ENCODE measurements at regions of chr20 and their contacts with region 1.

Region 1: GRCh38 chr20:57680131-57680716 is 29.6 kb downstream of the PMEPA1 start:
- DNase-seq: peak; percentile 95
- ATAC-seq: peak; percentile 71
- H3K4me3 ChIP-seq: peak overlapping the region; percentile 3 to 55 (median 25)
- H3K4me3 Mint-ChIP-seq: peak overlapping the region; percentile 86
- H3K27ac ChIP-seq: peak overlapping the region; percentile 88 to 96
- H3K27ac Mint-ChIP-seq: peak overlapping the region; percentile 96
- H3K4me1 ChIP-seq: peaks cover 94 to 100% of the 10 kb centered on the region in 2 donors
- H3K4me1 Mint-ChIP-seq: peaks cover 99% of the 10 kb centered on the region
- H3K27me3 ChIP-seq: no peaks in the 10 kb centered on the region
- H3K27me3 Mint-ChIP-seq: no peaks in the 10 kb centered on the region
- CTCF ChIP-seq: no peak

Region 2: GRCh38 chr20:57190363-57191264 is 489.6 kb before region 1 on chr20:
- CTCF ChIA-PET with region 1: no interaction called
- POLR2A ChIA-PET with region 1: no interaction called
- intact Hi-C with region 1: no loop called
- DNase-seq: no peak
- ATAC-seq: no peak
- H3K4me3 ChIP-seq: no peak overlapping the region
- H3K4me3 Mint-ChIP-seq: no peak overlapping the region
- H3K27ac ChIP-seq: no peak overlapping the region
- H3K27ac Mint-ChIP-seq: no peak overlapping the region
- H3K4me1 ChIP-seq: no peaks in the 10 kb centered on the region
- H3K4me1 Mint-ChIP-seq: no peaks in the 10 kb centered on the region
- H3K27me3 ChIP-seq: no peaks in the 10 kb centered on the region
- H3K27me3 Mint-ChIP-seq: peaks cover 3% of the 10 kb centered on the region
- CTCF ChIP-seq: no peak

Region 3: DNA sequence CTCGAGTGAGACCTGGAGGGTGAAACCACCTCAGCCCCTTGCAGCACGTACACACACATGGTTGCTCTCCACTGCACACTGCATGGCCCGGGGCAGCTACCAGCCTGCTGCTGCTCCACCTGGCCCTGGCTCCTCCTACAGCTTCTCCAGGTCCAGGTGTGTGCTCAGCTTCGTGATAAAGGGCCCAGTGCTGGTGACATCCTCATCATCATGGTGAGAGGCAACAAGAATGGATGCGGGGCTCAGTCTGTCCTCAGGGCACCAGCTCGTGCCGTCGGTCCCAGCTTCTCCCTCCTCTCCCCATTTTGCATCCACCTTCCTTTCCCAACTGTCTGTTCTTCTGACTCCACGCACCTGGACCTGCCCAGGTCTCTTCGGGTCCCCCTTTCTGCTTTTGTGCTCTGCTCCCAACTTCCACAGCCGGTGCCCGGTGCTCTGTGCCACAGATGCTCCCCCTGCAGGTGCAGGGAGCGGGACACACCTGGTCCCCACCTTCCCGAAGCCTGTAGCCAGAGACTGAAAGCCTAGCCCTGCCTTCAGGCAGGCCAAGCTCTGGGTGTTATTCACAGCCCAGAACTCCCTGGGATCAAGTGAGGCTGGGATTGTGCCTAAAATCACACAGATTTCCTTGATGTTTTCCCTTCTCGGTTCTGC is 389.3 kb before region 1 on chr20:
- CTCF ChIA-PET with region 1: no interaction called
- POLR2A ChIA-PET with region 1: no interaction called
- intact Hi-C with region 1: no loop called
- DNase-seq: no peak
- ATAC-seq: no peak
- H3K4me3 ChIP-seq: no peak overlapping the region
- H3K4me3 Mint-ChIP-seq: no peak overlapping the region
- H3K27ac ChIP-seq: no peak overlapping the region
- H3K27ac Mint-ChIP-seq: no peak overlapping the region
- H3K4me1 ChIP-seq: no peaks in the 10 kb centered on the region
- H3K4me1 Mint-ChIP-seq: no peaks in the 10 kb centered on the region
- H3K27me3 ChIP-seq: peaks cover 0 to 20% (median 2%) of the 10 kb centered on the region in 4 experiments
- H3K27me3 Mint-ChIP-seq: peaks cover 57% of the 10 kb centered on the region
- CTCF ChIP-seq: no peak

Region 4: GRCh38 chr20:57622579-57623377 is 57.4 kb before region 1 on chr20:
- CTCF ChIA-PET with region 1: interaction called, 70 read pairs
- POLR2A ChIA-PET with region 1: interaction called, 19 read pairs
- intact Hi-C with region 1: loop called (anchors 1 kb)
- DNase-seq: peak; percentile 69
- ATAC-seq: no peak
- H3K4me3 ChIP-seq: no peak overlapping the region
- H3K4me3 Mint-ChIP-seq: peak overlapping the region; percentile 13
- H3K27ac ChIP-seq: no peak overlapping the region
- H3K27ac Mint-ChIP-seq: peak overlapping the region; percentile 80
- H3K4me1 ChIP-seq: peaks cover 54 to 59% of the 10 kb centered on the region in 2 donors
- H3K4me1 Mint-ChIP-seq: peaks cover 65% of the 10 kb centered on the region
- H3K27me3 ChIP-seq: no peaks in the 10 kb centered on the region
- H3K27me3 Mint-ChIP-seq: no peaks in the 10 kb centered on the region
- CTCF ChIP-seq: peak; percentile 82

Region 5: DNA sequence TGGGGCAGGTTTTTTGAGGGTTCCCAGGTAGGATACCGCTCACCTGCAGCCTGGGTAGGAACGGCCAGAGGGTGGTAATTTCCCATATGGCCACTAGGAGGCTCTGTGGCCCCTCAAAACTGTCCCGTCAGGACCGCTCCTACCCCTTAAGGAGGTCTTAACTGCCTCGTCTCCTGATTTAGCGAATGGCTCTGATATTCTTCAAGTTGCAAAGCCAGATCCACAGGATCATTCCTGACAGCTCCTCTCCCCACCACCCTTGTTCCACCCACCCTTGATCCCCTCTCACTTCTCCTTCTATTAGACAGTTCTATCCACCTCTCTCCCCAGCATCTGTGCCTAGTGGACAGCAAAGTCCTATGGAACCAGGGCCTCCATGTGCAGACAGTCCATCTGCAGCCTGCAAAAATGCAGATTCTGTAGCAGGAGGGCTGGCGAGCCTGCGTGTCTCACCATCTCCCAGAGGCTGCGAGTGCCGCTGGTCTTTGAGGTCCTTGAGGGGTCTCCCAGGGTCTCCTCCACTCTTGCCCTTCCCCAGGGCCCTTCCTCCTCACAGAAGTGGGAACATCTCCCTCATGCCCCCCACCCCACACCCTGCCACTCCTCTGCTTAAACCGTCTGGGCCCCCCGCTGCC is 25.7 kb before region 1 on chr20:
- CTCF ChIA-PET with region 1: interaction called, 62 read pairs
- POLR2A ChIA-PET with region 1: interaction called, 4 read pairs
- intact Hi-C with region 1: loop called (anchors 1 kb)
- DNase-seq: peak; percentile 85
- ATAC-seq: peak; percentile 94
- H3K4me3 ChIP-seq: no peak overlapping the region
- H3K4me3 Mint-ChIP-seq: no peak overlapping the region
- H3K27ac ChIP-seq: no peak overlapping the region
- H3K27ac Mint-ChIP-seq: no peak overlapping the region
- H3K4me1 ChIP-seq: peaks cover 4 to 18% of the 10 kb centered on the region in 2 donors
- H3K4me1 Mint-ChIP-seq: peaks cover 34% of the 10 kb centered on the region
- H3K27me3 ChIP-seq: no peaks in the 10 kb centered on the region
- H3K27me3 Mint-ChIP-seq: no peaks in the 10 kb centered on the region
- CTCF ChIP-seq: peak; percentile 95

Region 6: DNA sequence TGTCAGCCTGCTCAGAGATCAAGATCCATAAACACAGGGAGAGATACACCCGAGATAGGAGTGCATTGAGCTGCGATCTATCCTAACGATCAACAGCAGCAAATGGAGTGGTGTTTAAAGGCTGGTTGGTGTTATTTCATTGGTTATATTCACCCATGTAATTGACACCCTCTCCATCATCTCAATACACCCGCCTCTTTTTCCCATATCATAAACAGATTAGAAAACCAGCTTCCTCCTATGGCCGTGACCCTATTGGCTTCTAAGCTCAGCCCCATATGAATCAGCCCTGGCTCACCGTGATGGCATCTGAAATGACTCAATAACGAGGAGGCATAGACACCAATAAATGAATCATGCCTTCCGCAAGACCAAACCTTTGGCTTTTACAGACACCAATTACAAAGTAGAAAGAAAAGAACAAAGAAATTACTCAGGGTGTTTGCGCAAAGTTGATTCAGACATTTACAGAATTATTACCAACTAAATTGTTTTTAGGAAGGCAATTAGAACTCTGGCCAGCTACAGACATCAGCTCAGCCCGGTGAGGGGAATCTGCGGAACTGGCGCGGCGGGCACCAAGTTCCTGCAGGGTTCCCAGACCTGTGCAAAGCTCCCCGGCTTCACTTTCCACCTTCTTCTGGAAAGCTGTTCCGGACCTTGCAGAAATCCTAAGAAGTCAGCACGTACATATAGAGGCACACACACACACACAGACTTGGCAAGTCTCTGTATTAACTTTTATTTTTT is 18.1 kb after region 1 on chr20:
- CTCF ChIA-PET with region 1: interaction called, 43 read pairs
- POLR2A ChIA-PET with region 1: interaction called, 14 read pairs
- intact Hi-C with region 1: loop called (anchors 1 kb)
- DNase-seq: no peak
- ATAC-seq: no peak
- H3K4me3 ChIP-seq: peak overlapping the region in 1 of 5 experiments; percentile 44
- H3K4me3 Mint-ChIP-seq: peak overlapping the region; percentile 79
- H3K27ac ChIP-seq: no peak overlapping the region
- H3K27ac Mint-ChIP-seq: peak overlapping the region; percentile 13
- H3K4me1 ChIP-seq: peaks cover 97 to 99% of the 10 kb centered on the region in 2 donors
- H3K4me1 Mint-ChIP-seq: peaks cover 95% of the 10 kb centered on the region
- H3K27me3 ChIP-seq: no peaks in the 10 kb centered on the region
- H3K27me3 Mint-ChIP-seq: no peaks in the 10 kb centered on the region
- CTCF ChIP-seq: no peak

Region 7: DNA sequence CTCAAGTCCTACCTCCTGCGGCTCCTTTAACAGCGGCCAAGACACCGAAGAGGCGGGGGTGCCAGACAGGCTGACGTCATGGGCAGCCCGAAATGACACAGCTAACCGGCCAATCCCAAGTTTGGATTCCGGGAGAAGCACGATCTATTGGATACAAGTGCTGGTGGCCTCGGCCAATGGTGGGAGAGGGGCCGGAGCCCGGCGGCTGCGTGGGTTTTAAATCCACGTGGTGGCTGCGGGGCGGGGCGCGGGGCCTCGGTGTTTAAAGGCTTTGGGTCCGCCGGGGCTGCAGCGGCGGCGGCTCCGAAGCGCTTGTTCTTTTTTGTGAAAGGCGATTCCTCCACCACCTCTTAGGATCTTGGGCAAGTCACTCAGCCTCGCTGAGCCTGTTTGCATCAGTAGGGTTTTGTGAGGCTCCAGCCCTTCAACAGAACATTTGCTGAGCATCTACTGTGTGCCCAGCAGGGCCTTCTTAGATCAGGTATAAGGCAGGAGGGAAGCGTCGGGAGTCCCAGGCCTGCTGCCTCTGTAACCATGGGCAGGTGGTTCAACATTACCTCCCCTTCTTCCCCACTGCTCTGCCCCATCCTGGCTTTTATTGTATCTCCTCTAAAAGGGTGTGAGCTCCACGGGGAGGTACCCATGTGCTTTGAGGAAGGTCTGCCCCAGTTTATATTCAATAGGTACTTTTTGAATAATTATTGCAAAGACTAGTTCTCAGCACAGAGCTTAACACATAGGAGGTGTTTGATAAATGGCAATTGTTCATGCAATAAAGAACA is 38.5 kb after region 1 on chr20:
- CTCF ChIA-PET with region 1: interaction called, 9 read pairs
- POLR2A ChIA-PET with region 1: no interaction called
- intact Hi-C with region 1: loop called (anchors 1 kb)
- DNase-seq: peak; percentile 96
- ATAC-seq: peak; percentile 100
- H3K4me3 ChIP-seq: peak overlapping the region in 4 of 5 experiments; percentile 21 to 53 (median 42)
- H3K4me3 Mint-ChIP-seq: peak overlapping the region; percentile 77
- H3K27ac ChIP-seq: no peak overlapping the region
- H3K27ac Mint-ChIP-seq: peak overlapping the region; percentile 81
- H3K4me1 ChIP-seq: peaks cover 9 to 11% of the 10 kb centered on the region in 2 donors
- H3K4me1 Mint-ChIP-seq: peaks cover 8% of the 10 kb centered on the region
- H3K27me3 ChIP-seq: peaks cover 0 to 11% (median 0%) of the 10 kb centered on the region in 4 experiments
- H3K27me3 Mint-ChIP-seq: peaks cover 7% of the 10 kb centered on the region
- CTCF ChIP-seq: no peak

Region 8: DNA sequence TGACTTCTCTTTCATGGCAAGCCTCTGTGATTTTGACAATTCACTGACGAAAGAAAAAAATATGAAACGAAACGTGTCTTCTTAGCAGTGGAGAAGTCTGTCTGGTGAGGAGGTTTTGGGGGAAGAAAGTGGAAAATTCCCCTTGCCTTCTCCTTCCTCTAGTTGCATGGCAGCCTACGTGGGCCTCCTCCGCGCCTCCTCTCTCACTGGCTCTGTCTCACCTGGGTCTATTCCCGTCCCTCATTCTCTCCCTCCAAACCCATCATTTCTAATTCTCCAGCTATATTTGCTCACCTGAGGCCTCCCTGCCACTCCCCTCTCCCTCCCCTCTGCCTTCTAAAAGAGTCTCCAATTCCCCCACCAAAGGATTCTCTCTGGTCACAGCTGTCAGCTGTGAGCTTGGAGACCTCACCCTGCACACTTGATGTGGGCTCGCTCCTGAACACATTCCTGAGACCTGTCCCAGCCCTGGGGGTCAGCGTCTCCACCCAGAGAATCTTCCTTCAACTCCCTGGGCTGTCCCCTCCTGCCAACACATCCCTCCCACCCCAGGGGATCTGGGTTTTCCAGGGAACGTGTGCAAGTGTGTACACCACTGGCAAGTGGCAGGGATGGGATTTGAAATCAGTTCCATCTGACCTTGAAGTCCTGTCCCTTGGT is 189.2 kb after region 1 on chr20:
- CTCF ChIA-PET with region 1: no interaction called
- POLR2A ChIA-PET with region 1: no interaction called
- intact Hi-C with region 1: no loop called
- DNase-seq: no peak
- ATAC-seq: no peak
- H3K4me3 ChIP-seq: no peak overlapping the region
- H3K4me3 Mint-ChIP-seq: no peak overlapping the region
- H3K27ac ChIP-seq: no peak overlapping the region
- H3K27ac Mint-ChIP-seq: no peak overlapping the region
- H3K4me1 ChIP-seq: no peaks in the 10 kb centered on the region
- H3K4me1 Mint-ChIP-seq: no peaks in the 10 kb centered on the region
- H3K27me3 ChIP-seq: peaks cover 0 to 25% (median 8%) of the 10 kb centered on the region in 4 experiments
- H3K27me3 Mint-ChIP-seq: peaks cover 42% of the 10 kb centered on the region
- CTCF ChIP-seq: no peak

Region 9: GRCh38 chr20:57902290-57902872 is 222.2 kb after region 1 on chr20:
- CTCF ChIA-PET with region 1: no interaction called
- POLR2A ChIA-PET with region 1: no interaction called
- intact Hi-C with region 1: no loop called
- DNase-seq: no peak
- ATAC-seq: no peak
- H3K4me3 ChIP-seq: no peak overlapping the region
- H3K4me3 Mint-ChIP-seq: no peak overlapping the region
- H3K27ac ChIP-seq: no peak overlapping the region
- H3K27ac Mint-ChIP-seq: no peak overlapping the region
- H3K4me1 ChIP-seq: no peaks in the 10 kb centered on the region
- H3K4me1 Mint-ChIP-seq: no peaks in the 10 kb centered on the region
- H3K27me3 ChIP-seq: peaks cover 0 to 9% (median 6%) of the 10 kb centered on the region in 4 experiments
- H3K27me3 Mint-ChIP-seq: peaks cover 43% of the 10 kb centered on the region
- CTCF ChIP-seq: no peak

Region 10: GRCh38 chr20:59006864-59007664 is 1326.8 kb after region 1 on chr20 and contains the start of gene CTSZ:
- CTCF ChIA-PET with region 1: no interaction called
- POLR2A ChIA-PET with region 1: no interaction called
- intact Hi-C with region 1: loop called (anchors 10 kb)
- DNase-seq: peak; percentile 60
- ATAC-seq: peak; percentile 23
- H3K4me3 ChIP-seq: peak within 1 kb of the TSS; percentile 79 to 91 (median 88)
- H3K4me3 Mint-ChIP-seq: peak within 1 kb of the TSS; percentile 98
- H3K27ac ChIP-seq: peak within 1 kb of the TSS; percentile 97
- H3K27ac Mint-ChIP-seq: peak within 1 kb of the TSS; percentile 99
- H3K4me1 ChIP-seq: peaks cover 45 to 65% of the 10 kb centered on the region in 2 donors
- H3K4me1 Mint-ChIP-seq: peaks cover 71% of the 10 kb centered on the region
- H3K27me3 ChIP-seq: no peaks in the 10 kb centered on the region
- H3K27me3 Mint-ChIP-seq: no peaks in the 10 kb centered on the region
- CTCF ChIP-seq: no peak
- total RNA-seq, gene CTSZ: 319 and 322 TPM in 2 replicates